ENCODE measurements at regions of chr2 and their contacts with region 1.

Region 1: DNA sequence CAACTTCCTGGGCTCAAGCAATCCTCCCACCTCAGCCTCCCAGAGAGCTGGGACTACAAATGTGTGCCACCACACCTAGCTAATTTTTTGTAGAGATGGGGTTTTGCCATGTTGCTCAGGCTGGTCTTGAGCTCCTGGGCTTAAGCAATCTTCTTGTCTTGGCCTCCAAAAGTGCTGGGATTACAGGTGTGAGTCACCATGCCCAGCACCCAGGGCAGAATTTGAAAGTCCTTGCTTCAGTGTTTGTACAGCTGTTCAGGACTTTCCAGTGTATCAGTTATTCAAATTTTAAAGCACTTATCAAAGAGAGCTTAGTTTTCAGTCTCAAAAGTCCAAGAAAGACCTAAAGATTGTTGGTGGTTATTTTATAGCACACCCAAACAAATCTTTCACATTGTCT is 43.6 kb upstream of the VPS54 start:
- DNase-seq: no peak
- ATAC-seq: no peak
- H3K4me3 ChIP-seq: no peak overlapping the region
- H3K27ac ChIP-seq: peak overlapping the region in 1 of 10 donors; percentile 78
- H3K4me1 ChIP-seq: peaks cover 0 to 20% (median 13%) of the 10 kb centered on the region in 9 donors
- H3K27me3 ChIP-seq: peaks cover 0 to 6% (median 0%) of the 10 kb centered on the region in 7 donors
- CTCF ChIP-seq: no peak

Region 2: DNA sequence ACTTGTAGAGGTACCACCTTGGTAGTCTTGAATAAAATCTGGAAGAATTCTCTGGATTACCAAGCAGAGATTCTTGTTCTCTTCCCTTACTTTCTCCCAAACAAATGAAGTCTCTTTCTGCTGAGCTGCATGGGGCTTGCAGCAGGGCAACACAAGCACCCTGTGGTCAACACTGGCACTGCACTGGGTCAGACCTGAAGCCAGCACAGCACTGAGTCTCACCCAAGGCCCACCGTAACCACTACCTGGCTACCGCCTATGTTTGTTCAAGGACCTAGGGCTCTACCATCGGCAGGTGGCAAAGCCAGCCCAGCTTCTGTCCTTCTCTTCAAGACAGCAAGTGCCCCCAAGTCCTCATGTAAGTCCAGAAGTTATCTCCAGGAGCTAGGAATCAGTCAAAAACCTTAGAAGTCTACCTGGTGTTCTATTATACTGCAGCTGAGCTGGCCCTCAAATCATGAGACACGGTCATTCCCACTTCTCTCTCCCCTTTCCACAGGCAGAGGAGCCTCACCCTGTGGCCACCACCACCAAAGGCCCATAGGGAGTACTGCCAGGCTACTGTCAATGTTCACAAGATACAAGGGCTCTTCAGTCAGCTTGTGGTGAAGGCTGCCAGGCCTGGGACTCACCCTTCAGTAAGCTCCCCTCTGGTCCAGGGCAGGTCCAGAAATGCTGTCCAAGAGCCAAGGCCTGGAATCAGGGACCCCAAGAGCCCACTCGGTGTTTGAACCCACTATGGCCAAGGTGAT is 62.0 kb before region 1 on chr2:
- intact Hi-C with region 1: no loop called
- DNase-seq: no peak
- ATAC-seq: peak in 5 of 8 donors; percentile 18 to 54 (median 43)
- H3K4me3 ChIP-seq: no peak overlapping the region
- H3K27ac ChIP-seq: no peak overlapping the region
- H3K4me1 ChIP-seq: peaks cover 0 to 48% (median 38%) of the 10 kb centered on the region in 9 donors
- H3K27me3 ChIP-seq: no peaks in the 10 kb centered on the region
- CTCF ChIP-seq: peak in 3 of 9 donors; percentile 5 to 18 (median 16)

Region 3: GRCh38 chr2:64052468-64053241 is 10.2 kb before region 1 on chr2:
- intact Hi-C with region 1: no loop called
- DNase-seq: peak in 1 of 2 donors; percentile 45
- ATAC-seq: peak; percentile 72 to 94 (median 81)
- H3K4me3 ChIP-seq: no peak overlapping the region
- H3K27ac ChIP-seq: peak overlapping the region; percentile 38 to 86 (median 70)
- H3K4me1 ChIP-seq: peaks cover 0 to 40% (median 15%) of the 10 kb centered on the region in 9 donors
- H3K27me3 ChIP-seq: no peaks in the 10 kb centered on the region
- CTCF ChIP-seq: no peak

Region 4: DNA sequence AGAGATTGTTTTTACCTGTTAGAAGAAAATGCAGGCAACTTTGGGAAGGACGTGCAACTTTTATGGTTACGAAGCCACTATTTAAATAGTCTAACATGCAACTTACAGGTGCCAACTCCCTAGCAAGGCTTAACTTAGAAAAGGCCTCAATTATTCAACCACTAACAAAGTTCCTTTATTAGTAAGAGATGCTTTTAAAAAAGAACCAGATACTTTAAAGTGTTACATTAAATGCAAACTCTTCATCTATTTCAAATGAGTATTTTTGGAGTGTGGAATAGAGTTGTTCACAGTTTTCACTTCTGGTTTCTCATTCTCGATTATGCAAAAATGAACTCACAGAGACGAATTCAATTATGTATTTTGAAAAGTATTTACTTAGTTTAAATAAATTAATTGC is 29.7 kb after region 1 on chr2:
- intact Hi-C with region 1: no loop called
- DNase-seq: no peak
- ATAC-seq: no peak
- H3K4me3 ChIP-seq: no peak overlapping the region
- H3K27ac ChIP-seq: no peak overlapping the region
- H3K4me1 ChIP-seq: no peaks in the 10 kb centered on the region
- H3K27me3 ChIP-seq: no peaks in the 10 kb centered on the region
- CTCF ChIP-seq: no peak

Region 5: GRCh38 chr2:64114063-64114911 is 51.5 kb after region 1 on chr2:
- intact Hi-C with region 1: loop called in 2 of 10 experiments (anchors 10 kb)
- DNase-seq: no peak
- ATAC-seq: peak in 1 of 8 donors; percentile 41
- H3K4me3 ChIP-seq: no peak overlapping the region
- H3K27ac ChIP-seq: peak overlapping the region in 4 of 10 donors; percentile 4 to 77 (median 52)
- H3K4me1 ChIP-seq: peaks cover 0 to 87% (median 60%) of the 10 kb centered on the region in 9 donors
- H3K27me3 ChIP-seq: no peaks in the 10 kb centered on the region
- CTCF ChIP-seq: no peak

Region 6: GRCh38 chr2:64133828-64134227 is 71.0 kb after region 1 on chr2:
- intact Hi-C with region 1: loop called in 1 of 10 experiments (anchors 5 kb)
- DNase-seq: no peak
- ATAC-seq: no peak
- H3K4me3 ChIP-seq: no peak overlapping the region
- H3K27ac ChIP-seq: no peak overlapping the region
- H3K4me1 ChIP-seq: peaks cover 0 to 95% (median 50%) of the 10 kb centered on the region in 9 donors
- H3K27me3 ChIP-seq: no peaks in the 10 kb centered on the region
- CTCF ChIP-seq: no peak

Region 7: GRCh38 chr2:64318476-64318748 is 255.6 kb after region 1 on chr2:
- intact Hi-C with region 1: loop called in 1 of 10 experiments (anchors 5 kb)
- DNase-seq: no peak
- ATAC-seq: no peak
- H3K4me3 ChIP-seq: no peak overlapping the region
- H3K27ac ChIP-seq: no peak overlapping the region
- H3K4me1 ChIP-seq: peaks cover 0 to 5% (median 2%) of the 10 kb centered on the region in 9 donors
- H3K27me3 ChIP-seq: peaks cover 0 to 4% (median 0%) of the 10 kb centered on the region in 7 donors
- CTCF ChIP-seq: no peak

Region 8: GRCh38 chr2:64453770-64454385 is 391.0 kb after region 1 on chr2 and contains the start of gene LGALSL:
- intact Hi-C with region 1: no loop called
- DNase-seq: peak; percentile 72 to 79
- ATAC-seq: peak; percentile 85 to 93 (median 90)
- H3K4me3 ChIP-seq: peak within 1 kb of the TSS; percentile 73 to 89 (median 81)
- H3K27ac ChIP-seq: peak within 1 kb of the TSS; percentile 89 to 98 (median 94)
- H3K4me1 ChIP-seq: peaks cover 0 to 41% (median 27%) of the 10 kb centered on the region in 9 donors
- H3K27me3 ChIP-seq: peaks cover 0 to 10% (median 0%) of the 10 kb centered on the region in 7 donors
- CTCF ChIP-seq: no peak
- total RNA-seq, gene LGALSL: 5.3 to 24.8 (median 12.3) TPM